ENCODE measurements at regions of chr12 and their contacts with region 1.

Region 1: GRCh38 chr12:31896514-31897039 is 62.6 kb upstream of the RESF1 start:
- DNase-seq: peak; percentile 35 to 96 (median 92)
- ATAC-seq: peak; percentile 97
- H3K4me3 ChIP-seq: no peak overlapping the region
- H3K4me3 Mint-ChIP-seq: peak overlapping the region; percentile 36 to 92 (median 76)
- H3K27ac ChIP-seq: peak overlapping the region; percentile 86
- H3K27ac Mint-ChIP-seq: peak overlapping the region; percentile 92 to 99 (median 97)
- H3K4me1 ChIP-seq: peaks cover 61% of the 10 kb centered on the region in 2 donors
- H3K4me1 Mint-ChIP-seq: peaks cover 33 to 74% (median 51%) of the 10 kb centered on the region in 7 donors
- H3K27me3 ChIP-seq: no peaks in the 10 kb centered on the region
- H3K27me3 Mint-ChIP-seq: peaks cover 0 to 6% (median 0%) of the 10 kb centered on the region in 5 donors

Region 2: DNA sequence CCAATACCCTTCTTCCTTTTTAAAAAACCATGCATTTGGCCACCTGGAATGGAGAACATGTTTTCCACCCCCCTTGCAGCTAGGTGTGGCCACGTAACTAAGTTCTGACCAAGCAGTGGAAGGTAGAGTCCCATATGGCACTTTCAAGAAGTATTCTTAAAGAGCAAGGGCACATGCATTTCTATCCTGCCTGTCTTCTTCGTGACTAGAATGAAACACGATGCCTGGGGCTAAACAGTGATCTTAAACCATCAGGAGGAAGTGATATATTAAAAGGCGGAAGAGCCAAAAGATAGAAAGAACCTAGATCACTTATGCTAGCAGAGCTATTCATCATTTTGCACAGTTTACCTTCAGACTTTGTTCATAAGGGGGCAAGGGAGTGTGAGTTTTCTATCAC is 838.9 kb before region 1 on chr12:
- CTCF ChIA-PET with region 1: no interaction called
- POLR2A ChIA-PET with region 1: no interaction called
- intact Hi-C with region 1: no loop called
- DNase-seq: no peak
- ATAC-seq: no peak
- H3K4me3 ChIP-seq: no peak overlapping the region
- H3K4me3 Mint-ChIP-seq: no peak overlapping the region
- H3K27ac ChIP-seq: no peak overlapping the region
- H3K27ac Mint-ChIP-seq: no peak overlapping the region
- H3K4me1 ChIP-seq: no peaks in the 10 kb centered on the region
- H3K4me1 Mint-ChIP-seq: peaks cover 0 to under 1% (median 0%) of the 10 kb centered on the region in 7 donors
- H3K27me3 ChIP-seq: no peaks in the 10 kb centered on the region
- H3K27me3 Mint-ChIP-seq: peaks cover 0 to 6% (median 0%) of the 10 kb centered on the region in 5 donors

Region 3: GRCh38 chr12:31682136-31682962 is 214.2 kb before region 1 on chr12:
- CTCF ChIA-PET with region 1: interaction called, 4 read pairs
- POLR2A ChIA-PET with region 1: no interaction called
- intact Hi-C with region 1: loop called in 1 of 2 experiments (anchors 1 kb)
- DNase-seq: peak; percentile 30 to 72 (median 66)
- ATAC-seq: peak; percentile 96
- H3K4me3 ChIP-seq: no peak overlapping the region
- H3K4me3 Mint-ChIP-seq: peak overlapping the region in 9 of 10 donors; percentile 2 to 74 (median 23)
- H3K27ac ChIP-seq: no peak overlapping the region
- H3K27ac Mint-ChIP-seq: peak overlapping the region; percentile 9 to 97 (median 74)
- H3K4me1 ChIP-seq: peaks cover 0 to 5% of the 10 kb centered on the region in 2 donors
- H3K4me1 Mint-ChIP-seq: peaks cover 5 to 17% (median 11%) of the 10 kb centered on the region in 7 donors
- H3K27me3 ChIP-seq: no peaks in the 10 kb centered on the region
- H3K27me3 Mint-ChIP-seq: no peaks in the 10 kb centered on the region

Region 4: DNA sequence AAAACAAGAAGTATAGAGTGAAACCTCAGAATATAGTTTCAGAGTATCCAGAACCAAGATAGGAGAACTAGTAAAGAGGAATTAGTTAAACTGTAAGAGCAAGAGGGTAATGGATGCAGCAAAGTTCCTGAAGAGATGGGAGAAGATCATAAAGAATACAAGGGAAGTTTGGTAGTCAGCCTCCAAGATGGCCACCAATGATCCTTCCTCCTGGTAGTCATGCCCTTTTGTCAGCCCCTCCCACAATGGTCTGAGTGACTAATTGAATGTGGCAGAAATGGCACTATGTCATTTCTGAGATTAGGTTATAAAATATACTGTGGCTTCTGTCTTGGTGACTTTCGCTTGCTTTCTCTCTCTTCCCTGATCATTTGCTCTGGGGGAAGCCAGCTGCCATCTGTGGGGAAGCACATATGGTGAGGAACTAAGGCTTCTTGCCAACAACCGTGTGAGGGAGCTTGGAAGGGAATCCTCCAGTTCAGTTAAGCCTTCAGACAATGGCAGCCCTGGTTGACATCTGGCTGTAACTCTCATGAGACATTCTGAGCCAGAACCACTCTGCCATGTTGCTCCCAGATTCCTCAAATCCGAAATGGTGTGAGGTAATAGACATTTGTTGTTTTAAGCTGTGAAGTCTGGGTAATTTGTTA is 112.5 kb before region 1 on chr12:
- CTCF ChIA-PET with region 1: no interaction called
- POLR2A ChIA-PET with region 1: no interaction called
- intact Hi-C with region 1: no loop called
- DNase-seq: no peak
- ATAC-seq: peak; percentile 64
- H3K4me3 ChIP-seq: no peak overlapping the region
- H3K4me3 Mint-ChIP-seq: no peak overlapping the region
- H3K27ac ChIP-seq: no peak overlapping the region
- H3K27ac Mint-ChIP-seq: peak overlapping the region in 3 of 9 donors; percentile 23 to 57 (median 37)
- H3K4me1 ChIP-seq: peaks cover 0 to 5% of the 10 kb centered on the region in 2 donors
- H3K4me1 Mint-ChIP-seq: peaks cover 1 to 43% (median 21%) of the 10 kb centered on the region in 7 donors
- H3K27me3 ChIP-seq: no peaks in the 10 kb centered on the region
- H3K27me3 Mint-ChIP-seq: no peaks in the 10 kb centered on the region

Region 5: GRCh38 chr12:31797230-31797872 is 99.2 kb before region 1 on chr12:
- CTCF ChIA-PET with region 1: no interaction called
- POLR2A ChIA-PET with region 1: interaction called, 7 read pairs
- intact Hi-C with region 1: loop called (anchors 2 to 5 kb)
- DNase-seq: peak in 6 of 9 donors; percentile 7 to 24 (median 19)
- ATAC-seq: peak; percentile 27
- H3K4me3 ChIP-seq: no peak overlapping the region
- H3K4me3 Mint-ChIP-seq: peak overlapping the region; percentile 8 to 76 (median 71)
- H3K27ac ChIP-seq: peak overlapping the region; percentile 39
- H3K27ac Mint-ChIP-seq: peak overlapping the region; percentile 30 to 93 (median 89)
- H3K4me1 ChIP-seq: peaks cover 0 to 25% of the 10 kb centered on the region in 2 donors
- H3K4me1 Mint-ChIP-seq: peaks cover 16 to 51% (median 46%) of the 10 kb centered on the region in 7 donors
- H3K27me3 ChIP-seq: no peaks in the 10 kb centered on the region
- H3K27me3 Mint-ChIP-seq: no peaks in the 10 kb centered on the region

Region 6: GRCh38 chr12:31832740-31833729 is 63.5 kb before region 1 on chr12:
- CTCF ChIA-PET with region 1: no interaction called
- POLR2A ChIA-PET with region 1: interaction called, 6 read pairs
- intact Hi-C with region 1: loop called (anchors 2 kb)
- DNase-seq: peak in 8 of 9 donors; percentile 8 to 73 (median 60)
- ATAC-seq: peak; percentile 86
- H3K4me3 ChIP-seq: peak overlapping the region; percentile 25
- H3K4me3 Mint-ChIP-seq: peak overlapping the region; percentile 51 to 87 (median 68)
- H3K27ac ChIP-seq: peak overlapping the region; percentile 37
- H3K27ac Mint-ChIP-seq: peak overlapping the region; percentile 14 to 88 (median 73)
- H3K4me1 ChIP-seq: peaks cover 27 to 29% of the 10 kb centered on the region in 2 donors
- H3K4me1 Mint-ChIP-seq: peaks cover 23 to 65% (median 56%) of the 10 kb centered on the region in 7 donors
- H3K27me3 ChIP-seq: no peaks in the 10 kb centered on the region
- H3K27me3 Mint-ChIP-seq: no peaks in the 10 kb centered on the region

Region 7: GRCh38 chr12:31928246-31929026 is 31.9 kb after region 1 on chr12:
- CTCF ChIA-PET with region 1: interaction called, 3 read pairs
- POLR2A ChIA-PET with region 1: interaction called, 19 read pairs
- intact Hi-C with region 1: loop called (anchors 1 to 2 kb)
- DNase-seq: peak in 8 of 9 donors; percentile 23 to 64 (median 49)
- ATAC-seq: peak; percentile 70
- H3K4me3 ChIP-seq: peak overlapping the region; percentile 26
- H3K4me3 Mint-ChIP-seq: peak overlapping the region; percentile 79 to 94 (median 90)
- H3K27ac ChIP-seq: peak overlapping the region; percentile 62
- H3K27ac Mint-ChIP-seq: peak overlapping the region; percentile 94 to 100 (median 97)
- H3K4me1 ChIP-seq: peaks cover 30 to 42% of the 10 kb centered on the region in 2 donors
- H3K4me1 Mint-ChIP-seq: peaks cover 27 to 58% (median 50%) of the 10 kb centered on the region in 7 donors
- H3K27me3 ChIP-seq: no peaks in the 10 kb centered on the region
- H3K27me3 Mint-ChIP-seq: no peaks in the 10 kb centered on the region

Region 8: DNA sequence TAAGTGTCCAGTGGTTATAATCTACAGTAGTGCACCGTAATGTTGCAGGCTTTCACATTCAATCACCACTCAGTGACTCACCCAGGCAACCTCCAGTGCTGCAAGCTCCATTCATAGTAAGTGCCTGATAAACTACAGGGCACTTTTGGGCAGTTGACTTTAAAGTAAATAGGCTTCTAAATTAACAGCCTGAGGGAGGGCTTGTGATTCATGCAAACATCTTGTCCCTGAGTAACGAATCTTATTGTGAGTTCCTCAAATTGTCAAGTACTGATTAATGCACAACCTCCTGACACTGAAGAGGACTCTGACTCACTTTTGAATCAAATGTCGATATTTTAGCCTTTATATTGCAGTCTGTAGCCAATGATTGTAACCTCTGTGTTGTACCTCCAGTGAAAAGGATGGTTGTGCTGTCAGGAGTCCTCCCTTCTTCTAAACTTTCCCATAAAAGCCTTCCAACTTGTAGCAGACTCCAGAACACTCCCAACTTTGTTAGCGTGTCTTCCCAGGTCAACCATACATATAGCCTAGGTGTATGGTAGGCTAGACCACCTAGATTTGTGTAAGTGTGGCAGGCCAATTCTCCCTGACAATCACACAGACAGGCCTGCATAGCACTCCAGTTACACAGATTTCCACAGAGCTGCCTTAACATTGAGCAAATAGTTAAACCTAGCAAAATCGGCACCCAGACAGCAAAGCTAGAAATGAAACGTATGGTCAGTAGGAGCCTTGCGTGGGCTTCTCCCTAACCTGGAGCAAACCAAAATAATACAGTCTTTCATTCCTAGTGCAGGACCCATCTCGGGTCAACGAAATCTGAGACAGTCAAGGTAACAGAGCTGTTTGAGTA is 155.2 kb after region 1 on chr12:
- CTCF ChIA-PET with region 1: no interaction called
- POLR2A ChIA-PET with region 1: no interaction called
- intact Hi-C with region 1: no loop called
- DNase-seq: no peak
- ATAC-seq: peak; percentile 60
- H3K4me3 ChIP-seq: no peak overlapping the region
- H3K4me3 Mint-ChIP-seq: no peak overlapping the region
- H3K27ac ChIP-seq: no peak overlapping the region
- H3K27ac Mint-ChIP-seq: peak overlapping the region in 2 of 9 donors; percentile 6 to 12
- H3K4me1 ChIP-seq: no peaks in the 10 kb centered on the region
- H3K4me1 Mint-ChIP-seq: peaks cover 0 to 12% (median 0%) of the 10 kb centered on the region in 7 donors
- H3K27me3 ChIP-seq: no peaks in the 10 kb centered on the region
- H3K27me3 Mint-ChIP-seq: no peaks in the 10 kb centered on the region

Region 9: GRCh38 chr12:32069071-32069470 is 172.5 kb after region 1 on chr12:
- CTCF ChIA-PET with region 1: no interaction called
- POLR2A ChIA-PET with region 1: no interaction called
- intact Hi-C with region 1: no loop called
- DNase-seq: no peak
- ATAC-seq: no peak
- H3K4me3 ChIP-seq: no peak overlapping the region
- H3K4me3 Mint-ChIP-seq: no peak overlapping the region
- H3K27ac ChIP-seq: no peak overlapping the region
- H3K27ac Mint-ChIP-seq: no peak overlapping the region
- H3K4me1 ChIP-seq: no peaks in the 10 kb centered on the region
- H3K4me1 Mint-ChIP-seq: peaks cover 0 to 7% (median 0%) of the 10 kb centered on the region in 7 donors
- H3K27me3 ChIP-seq: no peaks in the 10 kb centered on the region
- H3K27me3 Mint-ChIP-seq: peaks cover 0 to 8% (median 0%) of the 10 kb centered on the region in 5 donors

Measured in naive thymus-derived CD4-positive, alpha-beta T cell (primary cell).